Colonic mucosa (tissue), 4 donors: ENCODE measurements at regions of chr6 and their contacts with region 1.

Region 1: DNA sequence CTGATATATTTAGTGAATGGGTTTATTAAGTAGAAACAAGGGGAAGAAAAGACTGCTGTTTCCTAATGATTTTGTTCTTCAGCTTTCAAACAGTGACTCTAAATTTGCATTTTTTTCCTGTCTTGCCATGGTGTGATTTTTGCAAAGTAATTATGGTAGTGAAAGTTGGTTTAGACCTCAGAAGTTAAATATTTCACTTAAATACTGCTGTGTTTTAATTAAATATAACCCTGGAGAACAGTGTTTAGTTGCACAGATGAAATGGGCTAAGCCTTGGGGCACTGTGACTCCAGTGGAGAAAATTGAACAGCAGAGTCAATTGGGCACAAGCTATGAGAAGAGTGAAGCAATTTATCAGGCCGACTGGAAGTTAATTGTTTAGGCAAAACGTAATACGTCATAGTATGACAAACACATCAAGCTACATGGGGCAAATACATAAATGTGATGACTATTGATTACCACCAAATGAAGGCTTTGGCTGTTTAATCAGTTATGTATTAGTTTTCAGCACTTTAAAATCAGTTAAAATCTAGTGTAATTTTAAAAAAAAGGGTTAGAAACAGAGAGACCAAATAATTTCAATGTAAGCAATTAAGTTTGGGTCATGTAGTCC is 111.2 kb upstream of the MCHR2 start:
- DNase-seq: no peak
- H3K4me3 ChIP-seq: no peak overlapping the region
- H3K27ac ChIP-seq: no peak overlapping the region
- H3K4me1 ChIP-seq: no peaks in the 10 kb centered on the region
- H3K27me3 ChIP-seq: no peaks in the 10 kb centered on the region
- CTCF ChIP-seq: no peak

Region 2: DNA sequence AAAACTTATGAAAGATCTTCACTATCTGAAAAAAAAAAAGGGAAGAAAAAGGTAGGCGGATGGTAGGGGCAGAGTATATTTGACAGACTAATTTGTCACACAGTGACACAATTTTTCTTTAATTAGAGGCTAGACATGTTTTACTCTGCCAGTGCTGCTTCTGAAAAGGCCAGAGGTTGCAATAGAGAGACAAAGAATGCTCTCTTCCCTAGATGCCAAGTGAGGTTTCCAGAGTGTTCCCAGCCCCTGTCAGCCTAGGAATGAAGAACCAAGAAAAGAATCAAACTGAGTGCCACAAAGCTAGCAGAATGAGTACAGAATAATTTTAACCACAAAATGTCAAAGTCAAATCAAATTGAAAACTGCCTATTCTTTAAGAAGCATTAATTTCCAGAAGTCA is 693.2 kb before region 1 on chr6:
- intact Hi-C with region 1: no loop called
- DNase-seq: no peak
- H3K4me3 ChIP-seq: no peak overlapping the region
- H3K27ac ChIP-seq: no peak overlapping the region
- H3K4me1 ChIP-seq: no peaks in the 10 kb centered on the region
- H3K27me3 ChIP-seq: no peaks in the 10 kb centered on the region
- CTCF ChIP-seq: no peak

Region 3: GRCh38 chr6:100664274-100665040 is 559.2 kb after region 1 on chr6:
- intact Hi-C with region 1: loop called (anchors 5 kb)
- DNase-seq: no peak
- H3K4me3 ChIP-seq: no peak overlapping the region
- H3K27ac ChIP-seq: no peak overlapping the region
- H3K4me1 ChIP-seq: no peaks in the 10 kb centered on the region
- H3K27me3 ChIP-seq: no peaks in the 10 kb centered on the region
- CTCF ChIP-seq: peak; percentile 65